AG04450 (cell line): ENCODE measurements at regions of chr7 and their contacts with region 1.

Region 1: DNA sequence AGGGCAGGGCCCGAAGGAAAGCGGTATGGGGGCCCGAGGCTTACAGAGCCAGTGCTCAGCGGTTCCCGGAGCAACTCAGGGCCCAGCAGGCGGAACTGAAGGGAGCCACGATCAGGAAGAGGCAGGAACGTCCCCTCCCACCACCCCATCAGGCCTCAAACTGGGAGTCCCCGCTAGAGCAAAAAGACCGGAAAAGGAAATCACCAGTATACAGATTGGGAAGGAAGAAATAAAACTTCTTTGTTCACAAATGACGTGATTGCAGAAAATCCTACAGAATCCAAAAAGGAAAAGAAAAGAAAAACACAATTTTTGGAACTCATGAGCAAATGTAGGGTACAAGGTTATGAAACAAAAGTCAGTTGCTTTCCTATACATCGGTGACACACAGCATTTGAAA is 21.6 kb upstream of the ZFAND2A start:
- DNase-seq: no peak
- H3K4me3 ChIP-seq: no peak overlapping the region
- H3K27ac ChIP-seq: no peak overlapping the region
- H3K27me3 ChIP-seq: peaks cover 19% of the 10 kb centered on the region
- CTCF ChIP-seq: no peak

Region 2: DNA sequence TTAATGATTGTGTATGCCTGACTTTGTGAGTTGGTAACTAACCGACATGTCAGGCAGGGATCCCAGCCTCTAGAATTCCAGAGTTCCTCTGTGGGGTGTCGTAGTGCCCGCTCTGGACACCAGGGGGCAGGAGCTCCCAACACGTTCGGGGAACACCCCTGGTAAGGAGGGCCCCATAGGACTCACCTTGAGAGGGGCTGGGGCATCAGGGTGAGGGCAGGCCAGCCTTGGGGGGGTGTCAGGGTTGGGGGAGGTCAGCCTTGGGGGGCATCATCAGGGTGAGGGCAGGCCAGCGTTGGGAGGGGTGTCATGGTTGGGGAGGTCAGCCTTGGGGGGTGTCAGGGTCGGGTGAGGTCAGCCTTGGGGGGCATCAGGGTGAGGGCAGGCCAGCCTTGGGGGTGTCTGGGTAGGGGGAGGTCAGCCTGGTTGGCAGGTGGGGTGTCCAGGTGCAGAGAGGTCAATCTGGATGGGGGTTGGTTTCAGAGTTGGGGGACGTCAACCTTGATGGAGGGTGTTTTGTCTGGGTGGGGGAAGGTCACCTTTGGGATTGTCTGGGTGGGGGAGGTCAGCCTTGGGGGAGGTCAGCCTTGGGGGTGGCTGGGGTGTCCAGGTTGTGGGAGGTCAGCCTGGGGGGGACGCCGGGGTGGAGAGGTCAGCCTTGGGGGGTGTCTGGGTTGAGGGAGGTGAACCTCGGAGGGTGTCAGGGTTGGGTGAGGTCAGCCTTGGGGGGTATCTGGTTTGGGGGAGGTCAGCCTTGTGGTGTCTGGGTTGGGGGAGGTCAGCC is 395.0 kb before region 1 on chr7:
- CTCF ChIA-PET with region 1: interaction called, 11 read pairs
- POLR2A ChIA-PET with region 1: no interaction called
- DNase-seq: peak; percentile 21
- H3K4me3 ChIP-seq: no peak overlapping the region
- H3K27ac ChIP-seq: no peak overlapping the region
- H3K27me3 ChIP-seq: no peaks in the 10 kb centered on the region
- CTCF ChIP-seq: peak; percentile 92

Region 3: GRCh38 chr7:1200045-1200444 is 18.4 kb after region 1 on chr7:
- CTCF ChIA-PET with region 1: no interaction called
- POLR2A ChIA-PET with region 1: no interaction called
- DNase-seq: no peak
- H3K4me3 ChIP-seq: no peak overlapping the region
- H3K27ac ChIP-seq: no peak overlapping the region
- H3K27me3 ChIP-seq: peaks cover 31% of the 10 kb centered on the region
- CTCF ChIP-seq: no peak